ENCODE measurements at regions of chr2 and their contacts with region 1.

Region 1: GRCh38 chr2:2121887-2122286 is 209.2 kb downstream of the MYT1L start:
- DNase-seq: no peak
- H3K4me3 ChIP-seq: no peak overlapping the region
- H3K27ac ChIP-seq: no peak overlapping the region
- H3K4me1 ChIP-seq: no peaks in the 10 kb centered on the region
- H3K27me3 ChIP-seq: no peaks in the 10 kb centered on the region
- CTCF ChIP-seq: no peak

Region 2: DNA sequence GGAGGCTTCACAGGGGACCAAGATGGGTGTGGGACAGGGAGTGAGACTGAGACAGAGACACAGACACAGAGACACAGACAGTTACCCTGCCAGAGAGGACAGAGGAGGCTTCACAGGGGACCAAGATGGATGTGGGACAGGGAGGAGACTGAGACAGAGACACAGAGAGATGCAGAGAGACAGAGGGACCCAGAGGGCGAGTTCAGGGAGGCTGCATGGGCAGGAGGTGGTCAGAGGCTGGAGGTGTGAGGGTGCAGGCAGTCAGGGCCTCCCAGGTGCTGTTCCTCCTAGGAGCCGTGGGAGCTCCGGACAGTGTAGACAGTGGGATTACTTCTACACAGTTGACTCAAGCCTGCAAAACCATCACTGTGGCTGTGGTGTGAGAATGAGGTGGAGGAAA is 171.4 kb before region 1 on chr2:
- CTCF ChIA-PET with region 1: no interaction called
- dilution Hi-C with region 1: no loop called
- in situ Hi-C with region 1: no loop called
- intact Hi-C with region 1: no loop called
- DNase-seq: no peak
- H3K4me3 ChIP-seq: no peak overlapping the region
- H3K27ac ChIP-seq: no peak overlapping the region
- H3K4me1 ChIP-seq: no peaks in the 10 kb centered on the region
- H3K27me3 ChIP-seq: no peaks in the 10 kb centered on the region
- CTCF ChIP-seq: no peak

Region 3: DNA sequence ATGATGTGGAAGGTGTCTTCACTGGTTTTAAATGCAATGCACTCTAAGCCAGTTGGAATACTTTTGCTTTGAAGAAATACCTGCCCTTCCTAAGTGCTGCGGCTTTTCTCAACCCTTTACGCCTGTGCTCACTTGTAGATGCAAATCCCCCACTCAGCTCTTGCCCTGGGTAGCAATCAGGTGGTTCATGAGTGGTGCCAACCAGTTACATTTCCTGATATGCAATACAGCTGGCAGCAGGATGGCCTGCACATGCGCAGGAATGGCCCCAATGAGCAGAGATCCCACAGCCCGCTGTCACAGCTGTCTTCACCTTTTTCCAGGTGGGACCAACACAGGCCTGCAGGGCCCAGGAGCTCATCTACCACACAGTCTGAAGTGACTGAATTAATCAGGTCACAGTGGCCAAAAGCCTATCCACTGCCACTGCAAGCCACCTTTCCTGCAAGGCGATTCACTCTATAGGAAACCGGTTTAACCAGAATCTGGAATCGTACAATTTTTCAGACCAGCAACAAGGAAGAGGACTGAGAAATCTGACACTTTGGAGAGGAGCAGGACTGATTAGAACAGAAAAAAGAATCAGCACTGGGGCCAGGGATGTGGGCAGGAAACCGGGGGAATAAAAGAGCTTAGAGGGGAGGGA is 38.7 kb before region 1 on chr2:
- CTCF ChIA-PET with region 1: no interaction called
- dilution Hi-C with region 1: loop called (anchors 5 kb)
- in situ Hi-C with region 1: no loop called
- intact Hi-C with region 1: no loop called
- DNase-seq: no peak
- H3K4me3 ChIP-seq: no peak overlapping the region
- H3K27ac ChIP-seq: no peak overlapping the region
- H3K4me1 ChIP-seq: no peaks in the 10 kb centered on the region
- H3K27me3 ChIP-seq: no peaks in the 10 kb centered on the region
- CTCF ChIP-seq: no peak

Region 4: DNA sequence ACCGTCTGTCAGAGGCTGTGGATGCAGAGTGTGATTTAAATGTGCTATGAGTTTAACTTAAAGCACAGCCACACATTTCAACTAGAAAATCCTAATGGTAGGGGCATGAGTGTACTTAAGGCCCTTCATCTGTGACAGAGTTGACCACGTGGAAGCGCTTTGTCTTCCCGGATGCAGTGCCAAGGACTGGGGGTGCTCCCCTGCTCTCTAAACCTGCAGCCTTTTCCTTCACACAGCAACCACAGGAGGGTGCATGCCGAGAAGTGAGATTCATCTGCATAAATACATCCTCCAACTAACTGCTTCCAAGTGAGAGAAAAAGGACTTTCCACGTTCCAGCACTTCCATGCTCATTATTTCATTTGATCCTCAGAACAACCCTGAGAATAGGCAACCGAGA is 59.6 kb after region 1 on chr2:
- CTCF ChIA-PET with region 1: no interaction called
- dilution Hi-C with region 1: no loop called
- in situ Hi-C with region 1: no loop called
- intact Hi-C with region 1: loop called (anchors 2 kb)
- DNase-seq: no peak
- H3K4me3 ChIP-seq: no peak overlapping the region
- H3K27ac ChIP-seq: no peak overlapping the region
- H3K4me1 ChIP-seq: no peaks in the 10 kb centered on the region
- H3K27me3 ChIP-seq: no peaks in the 10 kb centered on the region
- CTCF ChIP-seq: no peak

Measured in mammary epithelial cell (primary cell).